ENCODE measurements at regions of chr6 and their contacts with region 1.

Region 1: GRCh38 chr6:43496370-43497128 is 13.6 kb downstream of the LRRC73 start:
- DNase-seq: no peak
- ATAC-seq: peak; percentile 79
- H3K4me3 ChIP-seq: peak overlapping the region; percentile 12 to 35; a peak in 3 of 4 replicates
- H3K27ac ChIP-seq: peak overlapping the region; percentile 57
- H3K4me1 ChIP-seq: peaks cover 27 to 49% of the 10 kb centered on the region in 2 experiments
- H3K27me3 ChIP-seq: no peaks in the 10 kb centered on the region
- CTCF ChIP-seq: peak; percentile 74 to 84 (median 83)
- POLR2A ChIP-seq: no peak
- RAD21 ChIP-seq: peak; percentile 89

Region 2: GRCh38 chr6:43263314-43264178 is 233.0 kb before region 1 on chr6:
- CTCF ChIA-PET with region 1: interaction called, 23 read pairs
- POLR2A ChIA-PET with region 1: no interaction called
- RAD21 ChIA-PET with region 1: interaction called in 1 of 2 experiments, 3 read pairs
- intact Hi-C with region 1: loop called (anchors 1 kb)
- DNase-seq: peak; percentile 51
- ATAC-seq: peak; percentile 99
- H3K4me3 ChIP-seq: no peak overlapping the region
- H3K27ac ChIP-seq: no peak overlapping the region
- H3K4me1 ChIP-seq: no peaks in the 10 kb centered on the region
- H3K27me3 ChIP-seq: no peaks in the 10 kb centered on the region
- CTCF ChIP-seq: peak; percentile 86 to 91 (median 88)
- POLR2A ChIP-seq: no peak
- RAD21 ChIP-seq: peak; percentile 97

Region 3: GRCh38 chr6:43454696-43455530 is 41.6 kb before region 1 on chr6:
- CTCF ChIA-PET with region 1: interaction called, 24 read pairs
- POLR2A ChIA-PET with region 1: no interaction called
- RAD21 ChIA-PET with region 1: interaction called in 1 of 2 experiments, 4 read pairs
- intact Hi-C with region 1: loop called (anchors 1 kb)
- DNase-seq: peak; percentile 60
- ATAC-seq: peak; percentile 76
- H3K4me3 ChIP-seq: peak overlapping the region; percentile 50 to 61
- H3K27ac ChIP-seq: no peak overlapping the region
- H3K4me1 ChIP-seq: peaks cover 8 to 39% of the 10 kb centered on the region in 2 experiments; a peak in 3 of 4 replicates
- H3K27me3 ChIP-seq: no peaks in the 10 kb centered on the region
- CTCF ChIP-seq: 0 out of 6 replicates have a peak, but pooled peaks of 1 of the 3 experiments have one; percentile 11
- POLR2A ChIP-seq: no peak
- RAD21 ChIP-seq: no peak

Measured in HCT116 (cell line).